SK-N-SH (cell line): ENCODE measurements at regions of chr17 and their contacts with region 1.

Region 1: GRCh38 chr17:76278952-76279741 is 14.0 kb downstream of the UBALD2 start:
- DNase-seq: peak; percentile 99
- H3K4me3 ChIP-seq: no peak overlapping the region; a peak in 1 of 4 replicates
- H3K27ac ChIP-seq: no peak overlapping the region
- H3K4me1 ChIP-seq: peaks cover 5 to 10% of the 10 kb centered on the region in 2 experiments; a peak in 1 of 4 replicates
- H3K27me3 ChIP-seq: no peaks in the 10 kb centered on the region
- CTCF ChIP-seq: peak; percentile 99
- EP300 ChIP-seq: no peak
- RAD21 ChIP-seq: peak; percentile 97

Region 2: GRCh38 chr17:75904749-75905521 is 374.2 kb before region 1 on chr17 and contains the start of gene MRPL38:
- CTCF ChIA-PET with region 1: interaction called, 11 read pairs
- POLR2A ChIA-PET with region 1: no interaction called
- DNase-seq: peak; percentile 99
- H3K4me3 ChIP-seq: peak within 1 kb of the TSS; percentile 70 to 88
- H3K27ac ChIP-seq: peak within 1 kb of the TSS; percentile 66 to 86
- H3K4me1 ChIP-seq: peaks cover 4 to 13% of the 10 kb centered on the region in 2 experiments; a peak in 2 of 4 replicates
- H3K27me3 ChIP-seq: no peaks in the 10 kb centered on the region
- CTCF ChIP-seq: peak; percentile 99
- EP300 ChIP-seq: peak in 1 of 2 experiments; percentile 56; a peak in 1 of 4 replicates
- RAD21 ChIP-seq: peak; percentile 94
- polyA plus RNA-seq, gene MRPL38: 62.5 and 93.9 TPM in 2 replicates

Region 3: GRCh38 chr17:75917141-75917916 is 361.8 kb before region 1 on chr17:
- CTCF ChIA-PET with region 1: no interaction called
- POLR2A ChIA-PET with region 1: no interaction called
- DNase-seq: no peak
- H3K4me3 ChIP-seq: no peak overlapping the region
- H3K27ac ChIP-seq: no peak overlapping the region
- H3K4me1 ChIP-seq: no peaks in the 10 kb centered on the region
- H3K27me3 ChIP-seq: no peaks in the 10 kb centered on the region
- CTCF ChIP-seq: no peak
- EP300 ChIP-seq: no peak
- RAD21 ChIP-seq: no peak

Region 4: DNA sequence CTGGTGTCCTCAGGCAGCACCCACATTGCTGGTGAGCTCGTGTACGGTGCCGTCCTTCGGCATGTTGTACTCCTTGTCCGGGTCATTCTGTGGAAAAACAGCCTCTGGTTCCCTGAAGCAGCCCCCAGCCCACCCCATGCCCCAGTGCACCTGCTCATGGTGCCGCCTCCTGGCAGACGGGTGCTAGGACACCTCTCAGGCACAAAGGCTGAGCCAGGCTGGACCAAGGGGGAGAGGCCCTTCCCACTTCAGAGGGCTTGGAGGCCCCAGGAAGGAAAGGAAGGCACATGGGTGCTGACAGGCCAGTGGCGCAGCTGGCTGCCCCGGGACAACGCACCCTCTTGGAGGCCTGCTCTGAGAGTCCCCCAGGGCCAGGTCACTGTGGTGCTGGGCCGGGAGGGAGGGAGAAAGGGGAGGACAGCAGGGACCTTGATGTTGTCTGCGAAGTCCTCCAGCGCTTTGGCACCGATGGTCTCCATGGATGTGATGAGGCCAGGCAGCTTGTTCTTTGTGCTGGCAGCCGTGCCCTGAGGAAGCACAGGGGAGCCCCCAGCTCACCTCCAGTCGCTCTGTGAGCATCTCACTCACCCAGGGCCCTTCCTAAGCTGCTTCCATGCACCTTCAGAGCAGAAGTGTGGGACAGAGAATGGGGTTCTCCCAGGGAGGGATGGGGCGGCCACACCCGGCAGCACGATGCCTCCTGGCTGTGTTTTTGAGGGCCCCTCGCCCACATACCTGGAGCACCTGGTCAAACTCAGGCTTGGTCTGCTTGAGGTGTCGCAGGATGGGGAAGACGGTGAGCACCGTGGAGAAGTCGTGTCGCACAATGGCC is 190.9 kb before region 1 on chr17:
- CTCF ChIA-PET with region 1: interaction called, 16 read pairs
- POLR2A ChIA-PET with region 1: no interaction called
- DNase-seq: peak; percentile 64
- H3K4me3 ChIP-seq: no peak overlapping the region
- H3K27ac ChIP-seq: no peak overlapping the region
- H3K4me1 ChIP-seq: no peaks in the 10 kb centered on the region
- H3K27me3 ChIP-seq: no peaks in the 10 kb centered on the region
- CTCF ChIP-seq: 0 out of 2 replicates have a peak, but pooled peaks have one; percentile 14
- EP300 ChIP-seq: no peak
- RAD21 ChIP-seq: no peak

Region 5: DNA sequence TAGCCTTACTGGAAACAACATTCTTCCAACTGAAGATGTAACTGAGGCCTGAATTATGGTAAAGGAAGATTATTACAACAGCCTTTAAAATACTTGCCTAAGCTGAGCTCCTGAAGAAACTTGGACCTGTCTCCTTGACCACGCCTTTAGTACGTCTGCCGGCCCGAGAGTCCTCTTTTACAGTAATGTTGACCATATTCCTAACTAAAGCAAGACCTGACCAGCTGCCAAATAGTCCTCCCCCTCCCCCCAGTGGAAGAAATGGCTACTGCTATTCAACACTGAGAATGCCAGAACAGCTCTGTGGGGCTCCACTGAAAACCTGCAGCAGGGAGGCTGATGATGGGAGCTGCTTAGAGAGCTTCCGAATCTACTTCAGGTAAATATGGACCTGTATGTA is 125.5 kb before region 1 on chr17:
- CTCF ChIA-PET with region 1: interaction called, 24 read pairs
- POLR2A ChIA-PET with region 1: no interaction called
- DNase-seq: no peak
- H3K4me3 ChIP-seq: no peak overlapping the region
- H3K27ac ChIP-seq: no peak overlapping the region
- H3K4me1 ChIP-seq: no peaks in the 10 kb centered on the region
- H3K27me3 ChIP-seq: no peaks in the 10 kb centered on the region
- CTCF ChIP-seq: peak; percentile 37
- EP300 ChIP-seq: no peak
- RAD21 ChIP-seq: no peak; the same call in 1 of the 2 replicates

Region 6: DNA sequence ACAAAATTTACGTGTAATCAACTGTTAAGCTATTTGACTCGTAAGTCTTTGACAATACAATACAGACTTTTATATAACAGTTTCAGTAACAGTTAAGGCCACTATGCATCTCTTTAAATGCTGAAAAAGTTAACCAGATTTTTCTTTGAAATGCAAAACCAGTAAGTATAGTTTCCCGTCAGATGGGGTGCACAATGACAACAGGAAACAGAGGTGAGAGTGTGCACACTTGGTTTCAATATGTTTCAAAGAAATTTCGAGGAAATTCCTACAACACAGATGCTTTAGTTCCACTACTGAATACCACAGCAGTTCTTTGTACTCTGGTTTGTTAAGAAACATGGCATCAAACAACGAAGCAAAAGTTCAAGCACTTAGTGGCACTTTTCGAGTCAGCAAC is 87.3 kb before region 1 on chr17:
- CTCF ChIA-PET with region 1: interaction called, 31 read pairs
- POLR2A ChIA-PET with region 1: no interaction called
- DNase-seq: no peak
- H3K4me3 ChIP-seq: 0 out of 4 replicates have a peak overlapping the region, but pooled peaks of 1 of the 2 experiments have one; percentile 15
- H3K27ac ChIP-seq: no peak overlapping the region
- H3K4me1 ChIP-seq: peaks cover 0 to 12% of the 10 kb centered on the region in 2 experiments; a peak in 2 of 4 replicates
- H3K27me3 ChIP-seq: no peaks in the 10 kb centered on the region
- CTCF ChIP-seq: no peak
- EP300 ChIP-seq: no peak
- RAD21 ChIP-seq: no peak

Region 7: DNA sequence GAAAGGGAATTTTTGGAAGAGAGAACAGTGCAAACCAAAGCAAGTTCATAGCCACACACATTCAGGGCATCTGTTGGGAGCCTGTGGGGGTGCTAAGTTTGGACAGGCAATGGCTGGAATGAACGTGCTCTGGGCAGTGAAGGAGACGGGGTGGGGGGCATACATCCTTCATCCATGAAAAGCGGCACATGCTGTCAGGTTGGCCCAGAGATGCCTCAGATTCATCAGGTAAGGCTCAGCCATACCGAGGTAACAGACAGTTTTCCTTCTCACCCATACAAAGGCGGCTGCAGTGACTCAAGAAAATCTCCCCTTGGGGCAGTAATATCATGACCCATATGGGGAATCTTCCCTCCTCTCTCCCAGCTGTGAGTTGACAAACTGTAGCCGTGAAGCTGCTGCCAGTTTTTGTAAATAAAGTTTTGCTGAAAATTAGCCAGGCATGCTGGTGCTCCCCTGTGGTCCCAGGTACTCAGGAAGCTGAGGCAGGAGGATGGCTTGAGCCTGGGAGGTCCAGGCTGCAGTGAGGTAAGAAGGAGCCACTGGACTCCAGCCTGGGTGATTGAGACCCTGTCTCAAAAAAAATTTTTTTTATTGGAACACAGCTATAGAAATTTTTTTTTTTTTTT is 23.2 kb before region 1 on chr17:
- CTCF ChIA-PET with region 1: interaction called, 86 read pairs
- POLR2A ChIA-PET with region 1: no interaction called
- DNase-seq: no peak
- H3K4me3 ChIP-seq: no peak overlapping the region
- H3K27ac ChIP-seq: no peak overlapping the region
- H3K4me1 ChIP-seq: no peaks in the 10 kb centered on the region; a peak in 1 of 4 replicates
- H3K27me3 ChIP-seq: no peaks in the 10 kb centered on the region
- CTCF ChIP-seq: no peak
- EP300 ChIP-seq: no peak
- RAD21 ChIP-seq: no peak

Region 8: DNA sequence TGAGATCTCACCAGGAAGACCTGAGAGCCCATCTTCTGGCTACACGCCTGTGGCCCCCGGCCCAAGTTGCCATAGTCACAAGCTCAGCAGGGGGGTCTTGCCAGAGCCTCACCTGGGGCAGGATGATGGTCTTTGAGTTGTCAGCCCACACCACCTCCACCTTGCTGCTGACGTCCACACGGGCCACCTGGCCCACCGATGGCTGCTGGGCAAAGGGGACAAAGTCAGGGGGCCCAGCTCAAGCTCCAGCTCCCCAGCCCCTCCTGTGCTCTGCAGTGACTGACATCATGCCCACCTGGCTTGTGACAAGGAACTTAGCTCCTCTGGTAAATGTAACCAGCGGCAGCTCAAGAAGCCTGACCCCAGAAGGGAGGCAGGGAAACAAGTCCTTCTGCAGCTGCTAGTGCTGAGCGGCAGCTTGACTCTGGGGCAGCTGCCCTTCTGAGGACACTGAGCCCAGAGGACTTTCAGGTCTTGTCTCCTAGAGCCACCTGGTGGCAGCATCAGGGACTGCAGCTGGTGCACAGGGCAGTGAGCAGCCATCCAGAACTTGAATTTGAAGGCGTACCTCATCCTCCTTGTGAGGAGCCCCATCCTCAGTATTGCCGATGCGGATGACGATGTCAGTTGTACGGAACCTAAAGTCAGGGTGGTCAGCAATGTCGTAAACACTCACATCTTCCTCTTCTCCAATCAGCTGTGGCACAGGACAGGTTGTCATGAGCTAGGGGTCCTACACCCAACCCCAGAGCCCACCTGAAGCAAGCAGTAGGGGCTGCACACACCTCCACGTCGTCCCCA is 118.7 kb after region 1 on chr17:
- CTCF ChIA-PET with region 1: interaction called, 34 read pairs
- POLR2A ChIA-PET with region 1: no interaction called
- DNase-seq: peak; percentile 92
- H3K4me3 ChIP-seq: no peak overlapping the region; a peak in 1 of 4 replicates
- H3K27ac ChIP-seq: no peak overlapping the region; a peak in 1 of 4 replicates
- H3K4me1 ChIP-seq: peaks cover 0 to 3% of the 10 kb centered on the region in 2 experiments; a peak in 1 of 4 replicates
- H3K27me3 ChIP-seq: no peaks in the 10 kb centered on the region
- CTCF ChIP-seq: peak; percentile 99
- EP300 ChIP-seq: no peak
- RAD21 ChIP-seq: peak; percentile 96

Region 9: DNA sequence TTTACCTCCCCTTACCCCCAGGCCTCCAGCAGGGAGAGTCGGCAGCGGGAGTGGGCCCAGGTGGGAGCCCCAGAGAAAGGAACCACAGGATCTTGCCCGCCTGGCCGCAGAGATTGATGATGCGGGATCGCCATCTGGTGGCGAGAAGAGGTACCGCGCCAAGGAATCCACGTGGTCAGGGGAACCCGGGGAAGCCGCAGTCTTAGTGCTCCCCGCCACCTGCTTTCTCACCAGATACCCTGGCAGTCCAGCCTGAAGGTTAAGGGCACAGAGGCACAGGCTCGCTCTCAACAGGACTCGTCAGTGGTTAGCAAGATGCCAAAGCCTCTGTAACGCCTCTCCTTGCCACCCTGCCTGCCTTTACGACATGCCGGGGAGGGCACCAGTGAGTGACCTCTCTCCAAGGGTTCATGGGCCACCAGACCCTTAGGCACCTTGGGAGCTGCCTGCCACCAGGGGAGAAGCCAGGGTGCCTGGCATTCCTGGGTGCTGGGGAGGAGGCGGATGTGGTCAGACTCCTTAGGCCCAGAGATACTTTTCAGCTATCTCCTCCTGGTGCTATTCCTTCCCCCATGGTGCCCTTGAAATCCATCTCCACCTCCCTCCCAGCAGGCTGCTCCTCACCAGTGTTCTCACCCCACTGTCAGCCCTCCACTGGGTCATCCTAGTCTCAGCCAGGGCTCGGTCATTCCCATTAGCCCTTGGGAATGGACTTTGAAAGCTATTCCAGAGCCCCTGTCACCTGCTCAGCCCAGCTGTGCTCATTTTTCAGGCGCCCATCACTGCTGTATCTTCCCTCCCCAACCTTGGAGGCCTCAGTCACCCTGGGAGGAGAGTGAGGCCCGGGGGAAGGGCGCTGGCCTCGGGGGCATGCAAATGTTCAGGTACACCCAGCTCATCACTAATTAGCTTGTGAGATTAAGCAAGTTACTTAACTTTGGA is 227.5 kb after region 1 on chr17:
- CTCF ChIA-PET with region 1: no interaction called
- POLR2A ChIA-PET with region 1: no interaction called
- DNase-seq: peak; percentile 95
- H3K4me3 ChIP-seq: no peak overlapping the region; a peak in 1 of 4 replicates
- H3K27ac ChIP-seq: no peak overlapping the region
- H3K4me1 ChIP-seq: peaks cover 0 to 14% of the 10 kb centered on the region in 2 experiments; a peak in 1 of 4 replicates
- H3K27me3 ChIP-seq: peaks cover 9% of the 10 kb centered on the region
- CTCF ChIP-seq: peak; percentile 96
- EP300 ChIP-seq: no peak
- RAD21 ChIP-seq: peak; percentile 99

Region 10: GRCh38 chr17:77011173-77012011 is 732.2 kb after region 1 on chr17:
- CTCF ChIA-PET with region 1: no interaction called
- POLR2A ChIA-PET with region 1: no interaction called
- DNase-seq: peak; percentile 58
- H3K4me3 ChIP-seq: peak overlapping the region in 1 of 2 experiments; percentile 1; a peak in 1 of 4 replicates
- H3K27ac ChIP-seq: no peak overlapping the region
- H3K4me1 ChIP-seq: no peaks in the 10 kb centered on the region
- H3K27me3 ChIP-seq: no peaks in the 10 kb centered on the region
- CTCF ChIP-seq: peak; percentile 72
- EP300 ChIP-seq: no peak
- RAD21 ChIP-seq: peak; percentile 83